ENCODE measurements at regions of chr14 and their contacts with region 1.

Region 1: DNA sequence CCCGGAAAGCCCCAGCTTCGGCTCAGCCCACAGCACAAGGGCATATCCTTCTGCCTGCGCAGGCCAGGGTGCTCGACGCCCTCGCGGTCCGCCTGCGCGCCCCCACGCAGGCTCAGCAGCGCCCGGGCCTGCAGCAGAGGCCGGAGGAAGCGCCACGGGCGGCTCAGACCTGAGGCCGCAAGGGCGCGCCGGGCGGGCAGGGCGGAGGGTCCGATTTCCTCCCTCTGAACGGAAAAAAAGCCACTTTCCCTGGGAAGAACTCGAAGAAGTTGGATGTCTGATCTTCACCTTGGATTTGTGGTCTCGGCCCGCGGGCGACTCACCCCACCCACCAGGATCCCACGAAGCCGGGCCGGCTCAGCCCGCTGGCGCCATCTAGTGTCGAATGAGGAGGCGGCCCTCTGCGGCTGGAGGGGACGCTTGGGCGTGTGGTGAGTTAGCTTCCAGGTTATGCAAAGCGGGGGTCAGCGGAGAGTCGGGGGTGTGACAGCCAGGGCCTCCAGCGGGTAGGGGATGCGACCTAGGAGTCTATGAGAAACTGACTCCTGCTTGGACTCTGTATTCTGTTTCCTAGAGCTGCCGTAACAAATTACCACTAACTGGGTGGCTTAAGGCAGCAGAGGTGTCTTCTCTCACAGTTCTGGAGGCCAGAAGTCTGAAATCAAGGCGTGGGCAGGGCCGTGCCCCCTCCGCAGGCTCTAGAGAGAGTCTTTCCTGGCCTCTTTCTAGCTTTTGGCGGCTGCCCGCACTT is 40.0 kb upstream of the SRSF5 start:
- DNase-seq: peak; percentile 39
- ATAC-seq: peak; percentile 92
- H3K4me3 ChIP-seq: peak overlapping the region; percentile 16 to 70 (median 44); a peak in 5 of 6 replicates
- H3K27ac ChIP-seq: no peak overlapping the region
- H3K4me1 ChIP-seq: peaks cover 35% of the 10 kb centered on the region
- H3K27me3 ChIP-seq: peaks cover 0 to 4% of the 10 kb centered on the region in 2 experiments; a peak in 4 of 5 replicates
- CTCF ChIP-seq: peak; percentile 98
- EP300 ChIP-seq: no peak
- POLR2A ChIP-seq: no peak
- RAD21 ChIP-seq: peak; percentile 97

Region 2: DNA sequence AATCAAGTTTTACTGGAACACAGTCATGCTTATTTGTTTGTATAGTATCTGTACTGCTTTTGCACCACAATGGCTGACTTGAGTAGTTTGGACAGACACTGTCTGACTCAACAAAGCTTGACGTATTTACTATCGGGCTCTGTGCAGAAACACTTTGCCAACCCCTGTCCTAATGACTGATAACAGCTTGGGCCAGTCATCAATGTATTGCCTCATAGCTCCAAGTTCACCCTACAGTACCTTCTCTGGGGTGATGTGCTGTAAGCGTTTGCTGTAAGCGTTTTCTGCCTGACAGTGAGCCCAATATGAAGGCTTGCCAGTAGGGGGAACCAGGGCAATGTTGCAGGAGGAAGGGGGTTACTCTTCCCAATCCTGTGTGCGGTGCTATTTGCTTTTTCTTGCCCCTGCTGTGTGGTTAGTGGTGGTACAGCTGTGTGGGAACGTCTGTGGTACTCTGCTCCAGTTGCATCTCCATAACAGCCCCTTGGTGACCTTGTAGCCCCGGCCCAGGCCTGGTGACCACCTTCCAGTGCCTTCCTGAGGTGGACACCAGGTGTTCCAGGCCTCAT is 146.8 kb before region 1 on chr14:
- CTCF ChIA-PET with region 1: interaction called, 34 read pairs
- POLR2A ChIA-PET with region 1: no interaction called
- in situ Hi-C with region 1: loop called (anchors 10 kb)
- intact Hi-C with region 1: loop called (anchors 1 kb)
- DNase-seq: peak; percentile 95
- ATAC-seq: peak; percentile 97
- H3K4me3 ChIP-seq: no peak overlapping the region
- H3K27ac ChIP-seq: peak overlapping the region; percentile 47
- H3K4me1 ChIP-seq: peaks cover 17% of the 10 kb centered on the region
- H3K27me3 ChIP-seq: peaks cover 0 to 21% of the 10 kb centered on the region in 2 experiments; a peak in 2 of 5 replicates
- CTCF ChIP-seq: peak; percentile 89
- EP300 ChIP-seq: peak; percentile 41 to 59; a peak in 1 of 4 replicates
- POLR2A ChIP-seq: no peak
- RAD21 ChIP-seq: peak; percentile 74; the same call in 1 of the 2 replicates

Region 3: DNA sequence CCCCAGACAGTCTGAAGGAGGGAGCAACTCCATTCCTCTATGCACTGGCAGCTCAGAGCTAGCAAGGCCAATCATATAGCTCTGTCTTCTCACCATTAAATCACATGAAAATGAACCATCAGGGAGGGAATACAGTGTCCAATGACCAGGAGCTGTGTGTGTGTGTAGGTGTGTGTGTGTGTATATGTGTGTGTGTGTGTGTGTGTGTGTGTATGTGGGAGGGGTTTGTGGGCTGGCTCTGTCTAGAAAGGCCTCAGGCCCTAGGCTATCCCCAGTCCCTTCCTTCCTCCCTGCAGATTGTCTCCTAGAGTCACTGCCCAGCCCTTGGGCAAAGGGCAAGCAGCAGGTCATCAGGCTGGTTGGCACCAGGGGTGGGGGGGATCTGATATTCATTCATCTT is 121.2 kb before region 1 on chr14:
- CTCF ChIA-PET with region 1: interaction called, 33 read pairs
- POLR2A ChIA-PET with region 1: no interaction called
- in situ Hi-C with region 1: loop called (anchors 5 kb)
- intact Hi-C with region 1: loop called (anchors 1 kb)
- DNase-seq: no peak
- ATAC-seq: peak; percentile 11
- H3K4me3 ChIP-seq: no peak overlapping the region
- H3K27ac ChIP-seq: no peak overlapping the region
- H3K4me1 ChIP-seq: peaks cover 56% of the 10 kb centered on the region
- H3K27me3 ChIP-seq: no peaks in the 10 kb centered on the region; a peak in 1 of 5 replicates
- CTCF ChIP-seq: no peak
- EP300 ChIP-seq: no peak
- POLR2A ChIP-seq: no peak
- RAD21 ChIP-seq: no peak

Region 4: GRCh38 chr14:69611201-69612011 is 115.5 kb before region 1 on chr14 and contains the start of gene SUSD6:
- CTCF ChIA-PET with region 1: no interaction called
- POLR2A ChIA-PET with region 1: no interaction called
- in situ Hi-C with region 1: loop called (anchors 5 kb)
- intact Hi-C with region 1: no loop called
- DNase-seq: peak; percentile 74
- ATAC-seq: peak; percentile 85
- H3K4me3 ChIP-seq: peak within 1 kb of the TSS; percentile 80 to 92 (median 87)
- H3K27ac ChIP-seq: peak within 1 kb of the TSS; percentile 59
- H3K4me1 ChIP-seq: peaks cover 72% of the 10 kb centered on the region
- H3K27me3 ChIP-seq: no peaks in the 10 kb centered on the region; a peak in 1 of 5 replicates
- CTCF ChIP-seq: no peak; the same call in 1 of the 2 replicates
- EP300 ChIP-seq: no peak
- POLR2A ChIP-seq: peak in 1 of 2 experiments; percentile 60; a peak in 1 of 4 replicates
- RAD21 ChIP-seq: peak; percentile 29; the same call in 1 of the 2 replicates
- total RNA-seq, gene SUSD6: 4.8 and 7.2 TPM in 2 replicates

Region 5: GRCh38 chr14:69741055-69741454 is 14.1 kb after region 1 on chr14:
- CTCF ChIA-PET with region 1: no interaction called
- POLR2A ChIA-PET with region 1: no interaction called
- in situ Hi-C with region 1: no loop called
- intact Hi-C with region 1: no loop called
- DNase-seq: peak; percentile 49
- ATAC-seq: no peak
- H3K4me3 ChIP-seq: no peak overlapping the region
- H3K27ac ChIP-seq: no peak overlapping the region
- H3K4me1 ChIP-seq: peaks cover 30% of the 10 kb centered on the region
- H3K27me3 ChIP-seq: no peaks in the 10 kb centered on the region
- CTCF ChIP-seq: no peak
- EP300 ChIP-seq: peak in 1 of 2 experiments; percentile 62; a peak in 1 of 4 replicates
- POLR2A ChIP-seq: no peak
- RAD21 ChIP-seq: no peak

Region 6: GRCh38 chr14:69812714-69813113 is 85.8 kb after region 1 on chr14:
- CTCF ChIA-PET with region 1: no interaction called
- POLR2A ChIA-PET with region 1: interaction called, 4 read pairs
- in situ Hi-C with region 1: no loop called
- intact Hi-C with region 1: loop called (anchors 1 kb)
- DNase-seq: peak; percentile 43
- ATAC-seq: no peak
- H3K4me3 ChIP-seq: no peak overlapping the region
- H3K27ac ChIP-seq: no peak overlapping the region
- H3K4me1 ChIP-seq: peaks cover 60% of the 10 kb centered on the region
- H3K27me3 ChIP-seq: no peaks in the 10 kb centered on the region
- CTCF ChIP-seq: peak; percentile 68
- EP300 ChIP-seq: no peak
- POLR2A ChIP-seq: no peak
- RAD21 ChIP-seq: peak; percentile 47; the same call in 1 of the 2 replicates

Region 7: GRCh38 chr14:69818757-69819191 is 91.8 kb after region 1 on chr14:
- CTCF ChIA-PET with region 1: interaction called, 9 read pairs
- POLR2A ChIA-PET with region 1: no interaction called
- in situ Hi-C with region 1: no loop called
- intact Hi-C with region 1: loop called (anchors 1 kb)
- DNase-seq: peak; percentile 68
- ATAC-seq: peak; percentile 94
- H3K4me3 ChIP-seq: no peak overlapping the region
- H3K27ac ChIP-seq: no peak overlapping the region
- H3K4me1 ChIP-seq: peaks cover 12% of the 10 kb centered on the region
- H3K27me3 ChIP-seq: no peaks in the 10 kb centered on the region; a peak in 1 of 5 replicates
- CTCF ChIP-seq: peak; percentile 88
- EP300 ChIP-seq: no peak
- POLR2A ChIP-seq: no peak
- RAD21 ChIP-seq: peak; percentile 96

Region 8: GRCh38 chr14:70027785-70028428 is 301.0 kb after region 1 on chr14:
- CTCF ChIA-PET with region 1: interaction called, 6 read pairs
- POLR2A ChIA-PET with region 1: no interaction called
- in situ Hi-C with region 1: loop called (anchors 5 kb)
- intact Hi-C with region 1: loop called (anchors 1 kb)
- DNase-seq: peak; percentile 43
- ATAC-seq: peak; percentile 87
- H3K4me3 ChIP-seq: no peak overlapping the region
- H3K27ac ChIP-seq: no peak overlapping the region
- H3K4me1 ChIP-seq: peaks cover 9% of the 10 kb centered on the region
- H3K27me3 ChIP-seq: no peaks in the 10 kb centered on the region
- CTCF ChIP-seq: peak; percentile 94
- EP300 ChIP-seq: no peak
- POLR2A ChIP-seq: no peak
- RAD21 ChIP-seq: peak; percentile 96